ENCODE measurements at regions of chr6 and their contacts with region 1.

Region 1: GRCh38 chr6:20126789-20127653 is 85.2 kb downstream of the MBOAT1 start:
- DNase-seq: peak; percentile 77 to 89 (median 87)
- ATAC-seq: peak; percentile 87 to 95
- H3K4me3 ChIP-seq: no peak overlapping the region
- H3K27ac ChIP-seq: no peak overlapping the region
- H3K4me1 ChIP-seq: peaks cover 5% of the 10 kb centered on the region
- H3K27me3 ChIP-seq: no peaks in the 10 kb centered on the region

Region 2: GRCh38 chr6:20092071-20092566 is 34.9 kb before region 1 on chr6:
- intact Hi-C with region 1: loop called in 1 of 4 experiments (anchors 5 kb)
- DNase-seq: no peak
- ATAC-seq: no peak
- H3K4me3 ChIP-seq: no peak overlapping the region
- H3K27ac ChIP-seq: no peak overlapping the region
- H3K4me1 ChIP-seq: no peaks in the 10 kb centered on the region
- H3K27me3 ChIP-seq: no peaks in the 10 kb centered on the region

Region 3: GRCh38 chr6:20202324-20202658 is 75.3 kb after region 1 on chr6:
- intact Hi-C with region 1: loop called in 1 of 4 experiments (anchors 10 kb)
- DNase-seq: no peak
- ATAC-seq: no peak
- H3K4me3 ChIP-seq: no peak overlapping the region
- H3K27ac ChIP-seq: no peak overlapping the region
- H3K4me1 ChIP-seq: peaks cover 4% of the 10 kb centered on the region
- H3K27me3 ChIP-seq: no peaks in the 10 kb centered on the region

Region 4: DNA sequence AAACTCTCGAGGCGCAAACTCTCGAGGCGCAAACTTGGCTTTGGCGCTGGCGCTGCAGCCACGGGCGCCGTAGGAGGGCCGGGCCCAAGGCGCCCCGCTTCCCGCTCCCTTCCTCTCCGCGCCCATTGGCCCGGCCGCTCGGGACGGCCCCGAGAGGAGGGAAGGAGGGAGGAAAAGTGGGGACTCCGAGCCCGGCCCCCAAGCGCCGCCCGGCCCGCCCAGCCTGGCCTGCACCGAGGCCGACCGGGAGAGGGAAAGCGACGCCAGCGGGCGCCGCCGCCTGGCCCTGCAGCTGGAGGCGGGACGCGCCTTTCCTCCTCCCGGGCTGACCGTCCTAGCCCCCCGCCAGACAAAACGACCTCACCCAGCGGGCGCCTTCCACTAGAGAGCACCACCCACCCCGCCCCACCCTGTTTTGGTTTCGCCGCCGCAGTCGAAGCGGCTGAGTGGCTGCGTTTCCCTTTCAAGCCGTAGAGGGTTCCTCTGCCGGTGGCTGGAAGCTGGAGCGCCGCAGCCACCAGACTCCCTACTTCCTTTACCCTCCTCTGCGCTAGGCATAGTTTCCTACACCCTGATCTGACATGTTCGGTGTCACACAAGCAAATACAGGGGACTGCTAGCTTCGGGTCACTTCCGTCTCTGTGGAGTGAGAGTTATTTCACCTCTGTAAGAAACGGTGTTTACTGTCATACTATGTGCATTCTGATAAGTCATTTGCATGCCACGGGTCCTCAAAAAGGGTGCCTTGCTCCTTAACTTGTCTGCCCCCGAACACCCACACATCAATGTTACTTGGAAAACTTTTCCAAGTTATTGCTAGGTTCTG is 85.6 kb after region 1 on chr6 and contains the start of gene MBOAT1:
- intact Hi-C with region 1: loop called in 3 of 4 experiments (anchors 10 kb)
- DNase-seq: peak; percentile 95 to 98 (median 98)
- ATAC-seq: peak; percentile 99
- H3K4me3 ChIP-seq: peak within 1 kb of the TSS; percentile 80
- H3K27ac ChIP-seq: peak within 1 kb of the TSS; percentile 97
- H3K4me1 ChIP-seq: peaks cover 8% of the 10 kb centered on the region
- H3K27me3 ChIP-seq: no peaks in the 10 kb centered on the region
- total RNA-seq, gene MBOAT1: 6.1 to 9.2 (median 7.0) TPM